H1 (cell line): ENCODE measurements at regions of chr6 and their contacts with region 1.

Region 1: GRCh38 chr6:44016131-44016870 is 111.0 kb downstream of the MRPL14 start:
- DNase-seq: no peak
- H3K4me3 ChIP-seq: no peak overlapping the region
- H3K27ac ChIP-seq: no peak overlapping the region
- H3K4me1 ChIP-seq: peaks cover 0 to 4% (median 3%) of the 10 kb centered on the region in 4 experiments; a peak in 3 of 7 replicates
- H3K27me3 ChIP-seq: no peaks in the 10 kb centered on the region
- CTCF ChIP-seq: no peak
- EP300 ChIP-seq: no peak
- POLR2A ChIP-seq: no peak
- RAD21 ChIP-seq: no peak

Region 2: DNA sequence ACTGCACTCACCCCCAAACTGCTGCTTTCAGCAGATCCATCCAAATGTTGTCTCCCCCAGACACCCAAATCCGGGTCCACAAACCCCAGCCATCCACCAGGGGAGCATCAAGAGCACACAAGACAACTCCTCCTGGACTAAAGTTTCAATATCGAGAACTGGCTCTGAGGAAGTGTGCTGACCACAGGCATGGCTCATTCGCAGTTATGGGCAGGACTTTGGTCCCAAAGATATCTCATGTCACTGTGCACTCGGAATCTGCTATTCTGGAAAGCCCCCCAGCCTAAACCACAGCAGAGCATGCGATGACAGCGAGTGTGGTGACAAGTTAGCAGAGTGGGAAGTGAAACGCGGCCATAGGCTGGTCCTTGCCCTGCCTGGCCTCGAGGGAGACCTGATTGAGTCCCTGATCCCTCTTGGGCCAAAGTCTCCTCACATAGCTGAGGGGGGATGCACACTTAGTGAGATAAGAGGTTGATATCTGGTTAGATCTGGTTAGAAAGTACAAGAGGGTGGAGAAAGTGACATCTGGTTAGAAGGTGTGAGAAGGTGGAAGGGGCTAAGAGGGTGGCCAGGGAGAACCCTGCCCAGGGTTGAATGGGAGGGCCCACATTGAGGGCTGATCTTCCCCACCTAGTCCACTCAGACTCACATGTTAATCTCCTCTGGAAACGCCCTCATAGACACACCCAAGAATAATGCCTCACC is 38.7 kb before region 1 on chr6:
- CTCF ChIA-PET with region 1: no interaction called
- POLR2A ChIA-PET with region 1: no interaction called
- DNase-seq: peak in 1 of 2 experiments; percentile 19
- H3K4me3 ChIP-seq: no peak overlapping the region
- H3K27ac ChIP-seq: no peak overlapping the region
- H3K4me1 ChIP-seq: no peaks in the 10 kb centered on the region
- H3K27me3 ChIP-seq: no peaks in the 10 kb centered on the region
- CTCF ChIP-seq: no peak
- EP300 ChIP-seq: no peak
- POLR2A ChIP-seq: no peak
- RAD21 ChIP-seq: no peak

Region 3: GRCh38 chr6:44028789-44029310 is 12.5 kb after region 1 on chr6:
- CTCF ChIA-PET with region 1: interaction called, 13 read pairs
- POLR2A ChIA-PET with region 1: interaction called, 9 read pairs
- DNase-seq: no peak
- H3K4me3 ChIP-seq: no peak overlapping the region
- H3K27ac ChIP-seq: no peak overlapping the region
- H3K4me1 ChIP-seq: peaks cover 0 to 4% (median 0%) of the 10 kb centered on the region in 4 experiments; a peak in 1 of 7 replicates
- H3K27me3 ChIP-seq: no peaks in the 10 kb centered on the region; a peak in 1 of 7 replicates
- CTCF ChIP-seq: no peak
- EP300 ChIP-seq: no peak
- POLR2A ChIP-seq: no peak
- RAD21 ChIP-seq: no peak

Region 4: GRCh38 chr6:44096612-44097011 is 80.3 kb after region 1 on chr6:
- CTCF ChIA-PET with region 1: no interaction called
- POLR2A ChIA-PET with region 1: no interaction called
- DNase-seq: peak in 1 of 2 experiments; percentile 75
- H3K4me3 ChIP-seq: no peak overlapping the region
- H3K27ac ChIP-seq: no peak overlapping the region
- H3K4me1 ChIP-seq: no peaks in the 10 kb centered on the region
- H3K27me3 ChIP-seq: no peaks in the 10 kb centered on the region
- CTCF ChIP-seq: peak; percentile 87 to 97 (median 87)
- EP300 ChIP-seq: no peak
- POLR2A ChIP-seq: no peak
- RAD21 ChIP-seq: peak; percentile 89 to 90